ENCODE measurements at regions of chr1 and their contacts with region 1.

Region 1: GRCh38 chr1:54488779-54489626 is 59.0 kb upstream of the ACOT11 start:
- DNase-seq: peak; percentile 91
- ATAC-seq: peak; percentile 49
- H3K4me3 Mint-ChIP-seq: peak overlapping the region; percentile 81
- H3K27ac Mint-ChIP-seq: peak overlapping the region; percentile 86
- H3K4me1 Mint-ChIP-seq: peaks cover 32% of the 10 kb centered on the region
- H3K27me3 Mint-ChIP-seq: peaks cover 13% of the 10 kb centered on the region
- CTCF ChIP-seq: peak; percentile 95

Region 2: DNA sequence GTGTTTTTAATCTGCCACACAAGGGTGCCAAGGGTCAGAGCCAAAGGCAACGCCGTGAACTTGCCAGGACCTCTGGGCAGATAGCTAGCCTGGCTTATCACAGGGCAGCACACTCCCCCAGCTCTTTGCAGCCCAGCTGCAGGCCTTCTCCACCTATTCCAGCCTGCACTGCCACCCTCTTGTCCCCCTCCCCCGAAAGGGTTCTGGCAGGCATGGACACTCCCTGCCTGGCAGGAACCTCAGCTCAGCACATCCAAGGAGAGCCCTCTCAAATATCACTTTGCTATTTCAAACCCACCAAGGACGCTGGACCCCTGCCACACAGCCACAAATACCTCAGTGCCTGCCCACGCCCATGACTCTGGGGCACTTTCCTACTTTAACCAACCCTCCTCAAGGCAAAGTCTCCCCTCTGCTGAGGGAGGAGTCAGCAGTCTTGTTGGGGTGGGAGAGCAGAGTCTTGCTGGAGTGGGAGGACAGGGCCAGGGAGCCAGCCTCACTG is 91.9 kb before region 1 on chr1:
- CTCF ChIA-PET with region 1: interaction called, 14 read pairs
- POLR2A ChIA-PET with region 1: interaction called, 3 read pairs
- DNase-seq: no peak
- ATAC-seq: peak; percentile 32; the same call in 1 of the 2 replicates
- H3K4me3 Mint-ChIP-seq: no peak overlapping the region
- H3K27ac Mint-ChIP-seq: peak overlapping the region; percentile 43
- H3K4me1 Mint-ChIP-seq: peaks cover 44% of the 10 kb centered on the region
- H3K27me3 Mint-ChIP-seq: no peaks in the 10 kb centered on the region
- CTCF ChIP-seq: no peak

Region 3: GRCh38 chr1:54596756-54597155 is 107.8 kb after region 1 on chr1:
- CTCF ChIA-PET with region 1: no interaction called
- POLR2A ChIA-PET with region 1: no interaction called
- DNase-seq: no peak
- ATAC-seq: no peak
- H3K4me3 Mint-ChIP-seq: no peak overlapping the region
- H3K27ac Mint-ChIP-seq: no peak overlapping the region
- H3K4me1 Mint-ChIP-seq: peaks cover 11% of the 10 kb centered on the region
- H3K27me3 Mint-ChIP-seq: no peaks in the 10 kb centered on the region
- CTCF ChIP-seq: no peak

Region 4: GRCh38 chr1:54886724-54887664 is 398.0 kb after region 1 on chr1 and contains the start of gene DHCR24:
- CTCF ChIA-PET with region 1: no interaction called
- POLR2A ChIA-PET with region 1: no interaction called
- DNase-seq: peak; percentile 86
- ATAC-seq: peak; percentile 91
- H3K4me3 Mint-ChIP-seq: peak within 1 kb of the TSS; percentile 95
- H3K27ac Mint-ChIP-seq: peak within 1 kb of the TSS; percentile 93
- H3K4me1 Mint-ChIP-seq: peaks cover 47% of the 10 kb centered on the region
- H3K27me3 Mint-ChIP-seq: no peaks in the 10 kb centered on the region
- CTCF ChIP-seq: no peak
- total RNA-seq, gene DHCR24: 300 to 337 TPM (median 336 TPM) in 3 replicates